Endothelial cell of umbilical vein (primary cell): ENCODE measurements at regions of chr5 and their contacts with region 1.

Region 1: DNA sequence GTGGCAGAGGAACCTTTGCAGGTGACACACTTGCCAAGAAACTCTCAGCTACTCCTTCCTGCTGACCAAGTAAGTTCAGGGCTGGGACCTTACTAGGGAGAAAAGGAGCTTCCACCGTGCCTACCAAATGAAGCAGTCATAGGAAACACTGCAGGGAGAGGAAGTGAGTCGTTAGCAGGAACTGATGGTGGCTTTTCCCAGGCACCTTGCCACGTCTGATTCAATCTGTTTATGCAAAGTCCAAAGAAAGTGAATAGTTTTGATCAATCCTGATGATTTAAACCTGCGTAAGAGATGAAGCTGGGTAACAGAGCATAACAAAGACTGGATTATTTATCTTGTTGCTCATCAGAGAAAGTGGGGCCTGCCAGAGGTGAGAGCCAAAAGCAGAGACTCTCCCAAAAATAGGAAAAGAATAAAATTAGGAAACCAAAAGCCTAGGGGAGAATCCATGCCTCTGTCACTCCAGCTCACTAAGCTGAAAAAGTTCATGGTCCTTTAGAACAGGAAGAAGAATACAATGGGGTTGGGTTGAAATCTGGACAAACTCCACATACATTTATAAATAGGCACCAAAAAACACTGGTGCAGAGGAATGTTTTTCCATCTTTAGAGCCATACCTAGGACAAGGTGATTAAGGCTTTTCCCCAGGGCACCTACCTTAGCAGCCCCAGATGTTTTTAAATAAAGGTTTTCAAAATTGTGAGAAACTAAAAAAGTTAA is 9.3 kb upstream of the PFDN1 start:
- DNase-seq: peak; percentile 99
- H3K4me3 ChIP-seq: peak overlapping the region in 2 of 3 experiments; percentile 10 to 18
- H3K27ac ChIP-seq: peak overlapping the region; percentile 98
- H3K4me1 ChIP-seq: peaks cover 40% of the 10 kb centered on the region
- H3K27me3 ChIP-seq: no peaks in the 10 kb centered on the region
- CTCF ChIP-seq: no peak
- POLR2A ChIP-seq: peak; percentile 65

Region 2: DNA sequence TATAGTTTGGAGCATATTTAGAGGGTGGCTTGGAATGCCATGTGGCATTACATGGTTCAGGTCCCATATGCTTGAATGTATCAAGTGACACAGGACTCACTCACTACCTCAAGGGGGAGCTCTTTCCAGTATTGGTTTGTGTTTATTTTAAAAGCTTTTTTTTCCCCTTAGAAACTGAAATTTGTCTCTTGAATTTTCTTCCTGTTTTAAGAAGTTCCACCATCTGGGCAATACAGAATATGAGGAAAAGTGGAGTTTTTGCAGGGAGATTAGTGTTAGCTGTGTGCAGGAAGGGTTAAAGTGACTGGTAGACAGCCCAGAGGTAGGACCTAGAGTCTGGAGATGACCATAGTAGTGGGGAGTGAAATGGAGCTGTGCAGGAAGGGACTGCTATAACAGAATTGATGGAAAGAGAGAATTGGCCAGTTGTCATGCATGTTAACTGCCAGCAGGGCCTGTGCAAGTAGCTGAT is 1522.4 kb before region 1 on chr5:
- CTCF ChIA-PET with region 1: no interaction called
- POLR2A ChIA-PET with region 1: no interaction called
- dilution Hi-C with region 1: no loop called
- intact Hi-C with region 1: no loop called
- DNase-seq: peak; percentile 50
- H3K4me3 ChIP-seq: no peak overlapping the region
- H3K27ac ChIP-seq: no peak overlapping the region
- H3K4me1 ChIP-seq: no peaks in the 10 kb centered on the region
- H3K27me3 ChIP-seq: no peaks in the 10 kb centered on the region
- CTCF ChIP-seq: peak; percentile 65 to 67
- POLR2A ChIP-seq: no peak

Region 3: GRCh38 chr5:139389701-139390638 is 922.3 kb before region 1 on chr5 and contains the start of gene MZB1:
- CTCF ChIA-PET with region 1: no interaction called
- POLR2A ChIA-PET with region 1: no interaction called
- dilution Hi-C with region 1: no loop called
- intact Hi-C with region 1: no loop called
- DNase-seq: no peak
- H3K4me3 ChIP-seq: no peak within 1 kb of the TSS
- H3K27ac ChIP-seq: no peak within 1 kb of the TSS
- H3K4me1 ChIP-seq: peaks cover 12% of the 10 kb centered on the region
- H3K27me3 ChIP-seq: peaks cover 7 to 14% of the 10 kb centered on the region in 2 experiments
- CTCF ChIP-seq: no peak
- POLR2A ChIP-seq: no peak
- total RNA-seq, gene MZB1: not detected in 2 replicates

Region 4: DNA sequence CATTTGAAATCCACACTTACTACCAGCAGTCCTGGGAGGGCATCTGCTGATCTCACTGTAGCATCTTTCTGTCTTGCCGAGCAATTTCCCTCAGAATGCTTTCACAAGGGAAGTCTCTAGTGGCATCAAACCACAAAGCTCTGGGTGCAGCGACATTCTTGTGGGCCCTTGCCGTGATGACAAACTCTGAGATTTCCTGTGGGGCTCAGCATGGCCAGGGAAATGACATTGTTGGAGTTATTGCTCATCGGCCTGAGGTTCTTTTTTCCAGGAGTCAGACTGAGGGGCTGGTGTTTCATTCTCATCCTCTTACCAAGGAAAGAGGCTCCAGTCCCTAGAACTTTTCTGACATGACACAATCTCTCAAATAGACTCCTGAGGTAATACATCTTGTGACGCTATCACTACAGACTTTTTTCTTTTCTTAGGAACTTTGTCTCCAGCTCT is 60.7 kb before region 1 on chr5:
- CTCF ChIA-PET with region 1: interaction called, 3 read pairs
- POLR2A ChIA-PET with region 1: no interaction called
- dilution Hi-C with region 1: no loop called
- intact Hi-C with region 1: loop called (anchors 1 kb)
- DNase-seq: peak; percentile 89
- H3K4me3 ChIP-seq: peak overlapping the region in 1 of 3 experiments; percentile 32
- H3K27ac ChIP-seq: peak overlapping the region; percentile 97
- H3K4me1 ChIP-seq: peaks cover 61% of the 10 kb centered on the region
- H3K27me3 ChIP-seq: no peaks in the 10 kb centered on the region
- CTCF ChIP-seq: no peak
- POLR2A ChIP-seq: peak; percentile 67

Region 5: GRCh38 chr5:140261403-140262171 is 50.6 kb before region 1 on chr5:
- CTCF ChIA-PET with region 1: no interaction called
- POLR2A ChIA-PET with region 1: no interaction called
- dilution Hi-C with region 1: no loop called
- intact Hi-C with region 1: loop called (anchors 1 kb)
- DNase-seq: peak; percentile 97
- H3K4me3 ChIP-seq: peak overlapping the region in 1 of 3 experiments; percentile 23
- H3K27ac ChIP-seq: peak overlapping the region; percentile 84
- H3K4me1 ChIP-seq: peaks cover 30% of the 10 kb centered on the region
- H3K27me3 ChIP-seq: no peaks in the 10 kb centered on the region
- CTCF ChIP-seq: no peak
- POLR2A ChIP-seq: peak; percentile 53

Region 6: DNA sequence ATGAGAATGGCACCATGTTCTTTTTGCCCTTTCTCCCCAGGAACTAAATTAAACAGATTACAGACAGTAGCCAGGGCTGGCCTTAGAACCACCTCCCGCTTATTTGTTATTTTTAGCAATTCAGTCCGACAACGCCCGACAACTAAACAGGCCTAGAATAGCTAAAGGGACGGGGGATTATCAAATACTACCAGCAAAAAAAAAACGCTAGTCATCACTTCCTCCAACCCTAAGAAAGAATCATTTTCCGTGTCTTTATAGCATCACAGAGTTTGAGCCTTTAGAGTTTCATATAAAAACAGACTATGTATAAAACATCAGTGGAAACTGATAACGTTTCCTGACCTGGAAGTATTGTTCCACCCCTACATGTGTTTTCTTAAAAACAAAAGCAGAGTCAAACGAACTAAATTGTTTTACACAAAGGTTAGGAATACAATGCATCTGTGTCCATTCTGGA is 44.6 kb before region 1 on chr5:
- CTCF ChIA-PET with region 1: interaction called, 3 read pairs
- POLR2A ChIA-PET with region 1: no interaction called
- dilution Hi-C with region 1: no loop called
- intact Hi-C with region 1: loop called (anchors 1 kb)
- DNase-seq: peak; percentile 92
- H3K4me3 ChIP-seq: peak overlapping the region in 1 of 3 experiments; percentile 37
- H3K27ac ChIP-seq: peak overlapping the region; percentile 84
- H3K4me1 ChIP-seq: peaks cover 24% of the 10 kb centered on the region
- H3K27me3 ChIP-seq: no peaks in the 10 kb centered on the region
- CTCF ChIP-seq: no peak
- POLR2A ChIP-seq: no peak

Region 7: DNA sequence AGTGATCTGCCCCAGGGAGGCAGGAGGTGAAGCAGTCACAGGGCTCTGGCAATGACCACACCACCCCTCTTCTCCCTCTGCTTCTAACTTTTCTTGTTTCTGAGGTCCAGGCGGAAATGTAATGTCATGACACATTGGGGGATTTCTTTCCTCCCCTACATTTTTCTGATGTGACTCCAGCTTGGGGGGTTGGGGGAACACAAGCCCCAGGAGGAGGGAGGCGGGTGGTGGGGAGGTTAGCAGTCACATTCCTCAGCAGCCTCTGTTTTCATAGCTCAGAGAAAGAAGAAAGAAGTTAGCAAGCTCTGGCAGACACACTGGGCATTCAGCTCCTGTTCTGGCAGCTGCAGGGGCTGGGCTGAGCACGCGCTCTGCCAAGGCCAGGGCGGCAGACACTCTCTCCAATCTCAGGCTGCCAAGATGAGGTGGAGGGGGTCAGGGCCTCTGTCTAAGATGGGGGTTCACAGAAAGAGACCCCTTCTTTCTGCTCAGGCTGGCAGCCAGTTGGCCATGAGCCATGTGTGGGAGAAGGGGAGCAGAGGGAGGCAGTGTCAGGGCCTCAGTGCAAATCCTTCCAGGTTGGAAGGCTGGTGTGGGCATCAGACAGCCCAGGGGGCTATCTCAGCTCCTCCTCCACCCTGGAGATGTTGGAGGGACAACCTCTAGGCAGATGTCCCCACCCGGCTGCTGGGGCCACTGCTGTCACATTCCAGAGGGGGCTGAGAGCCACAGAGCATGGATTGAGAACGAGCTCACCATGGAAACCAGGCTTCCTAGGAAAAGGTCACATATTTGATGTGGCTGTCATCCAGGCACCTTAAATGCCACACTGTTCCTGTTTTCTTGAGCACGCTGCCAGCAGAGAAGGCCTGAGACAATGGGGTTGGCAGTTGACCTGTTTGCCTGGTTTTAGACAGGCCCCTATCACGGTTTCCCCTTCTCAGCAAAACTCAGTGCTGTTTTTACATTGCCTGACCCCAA is 10.8 kb after region 1 on chr5:
- CTCF ChIA-PET with region 1: interaction called, 29 read pairs
- POLR2A ChIA-PET with region 1: interaction called, 11 read pairs
- dilution Hi-C with region 1: no loop called
- intact Hi-C with region 1: loop called (anchors 1 kb)
- DNase-seq: peak; percentile 94
- H3K4me3 ChIP-seq: no peak overlapping the region
- H3K27ac ChIP-seq: peak overlapping the region; percentile 99
- H3K4me1 ChIP-seq: peaks cover 55% of the 10 kb centered on the region
- H3K27me3 ChIP-seq: no peaks in the 10 kb centered on the region
- CTCF ChIP-seq: no peak
- POLR2A ChIP-seq: no peak

Region 8: DNA sequence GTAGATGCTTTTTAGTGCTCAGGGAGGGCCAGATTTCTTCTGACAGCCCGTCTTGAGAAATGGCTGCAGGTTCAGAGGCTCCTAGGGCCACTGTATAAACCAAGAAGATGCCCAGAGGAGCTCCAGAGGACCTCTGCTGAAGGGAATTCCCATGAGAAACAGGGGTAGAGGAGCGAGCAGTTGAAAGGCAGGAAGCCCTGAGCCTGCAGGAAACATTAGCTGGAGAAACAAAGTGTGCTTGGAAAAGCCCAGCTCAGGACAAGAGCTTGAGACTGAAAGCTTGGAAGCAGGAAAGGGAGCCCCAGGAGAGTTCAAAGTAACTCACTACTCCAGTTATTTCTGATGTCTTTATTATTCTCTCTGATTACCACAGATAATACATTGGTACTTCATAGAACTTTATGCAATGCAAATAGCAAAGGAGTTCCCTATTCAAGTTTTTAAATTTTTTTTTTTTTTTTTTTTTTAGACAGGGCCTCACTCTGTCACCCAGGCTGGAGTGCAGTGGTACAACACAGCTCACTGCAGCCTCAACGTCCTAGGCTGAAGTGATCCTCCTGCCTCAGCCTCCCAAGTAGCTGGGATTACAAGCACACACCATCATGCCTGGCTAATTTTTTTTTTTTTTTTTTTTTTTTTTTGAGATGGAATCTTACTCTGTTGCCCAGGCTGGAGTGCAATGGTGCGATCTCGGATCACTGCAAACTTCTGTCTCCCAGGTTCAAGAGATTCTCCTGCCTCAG is 17.7 kb after region 1 on chr5:
- CTCF ChIA-PET with region 1: interaction called, 29 read pairs
- POLR2A ChIA-PET with region 1: interaction called, 5 read pairs
- dilution Hi-C with region 1: no loop called
- intact Hi-C with region 1: loop called (anchors 1 kb)
- DNase-seq: peak; percentile 94
- H3K4me3 ChIP-seq: no peak overlapping the region
- H3K27ac ChIP-seq: peak overlapping the region; percentile 61
- H3K4me1 ChIP-seq: peaks cover 30% of the 10 kb centered on the region
- H3K27me3 ChIP-seq: no peaks in the 10 kb centered on the region
- CTCF ChIP-seq: no peak
- POLR2A ChIP-seq: no peak